Activated CD8-positive, alpha-beta memory T cell treated with anti-CD3 and anti-CD28 coated beads, Interleukin-2, amount 10 ng/mL, durations not matched to agents 7 days and 5 days (primary cell): ENCODE measurements at regions of chr12 and their contacts with region 1.

Region 1: GRCh38 chr12:55073043-55074022 is 52.9 kb upstream of the OR9K2 start:
- DNase-seq: peak; percentile 83
- ATAC-seq: peak; percentile 66
- H3K4me3 Mint-ChIP-seq: no peak overlapping the region
- H3K27ac Mint-ChIP-seq: no peak overlapping the region
- H3K4me1 Mint-ChIP-seq: peaks cover 1% of the 10 kb centered on the region
- H3K27me3 Mint-ChIP-seq: peaks cover 35% of the 10 kb centered on the region

Region 2: GRCh38 chr12:54749191-54749818 is 324.0 kb before region 1 on chr12:
- CTCF ChIA-PET with region 1: interaction called, 87 read pairs
- DNase-seq: peak; percentile 53
- ATAC-seq: peak; percentile 96
- H3K4me3 Mint-ChIP-seq: peak overlapping the region; percentile 39
- H3K27ac Mint-ChIP-seq: peak overlapping the region; percentile 67
- H3K4me1 Mint-ChIP-seq: peaks cover 21% of the 10 kb centered on the region
- H3K27me3 Mint-ChIP-seq: peaks cover 5% of the 10 kb centered on the region

Region 3: GRCh38 chr12:54958048-54958658 is 115.2 kb before region 1 on chr12:
- CTCF ChIA-PET with region 1: interaction called, 16 read pairs
- DNase-seq: peak; percentile 61
- ATAC-seq: peak; percentile 49
- H3K4me3 Mint-ChIP-seq: no peak overlapping the region
- H3K27ac Mint-ChIP-seq: no peak overlapping the region
- H3K4me1 Mint-ChIP-seq: peaks cover 44% of the 10 kb centered on the region
- H3K27me3 Mint-ChIP-seq: no peaks in the 10 kb centered on the region

Region 4: DNA sequence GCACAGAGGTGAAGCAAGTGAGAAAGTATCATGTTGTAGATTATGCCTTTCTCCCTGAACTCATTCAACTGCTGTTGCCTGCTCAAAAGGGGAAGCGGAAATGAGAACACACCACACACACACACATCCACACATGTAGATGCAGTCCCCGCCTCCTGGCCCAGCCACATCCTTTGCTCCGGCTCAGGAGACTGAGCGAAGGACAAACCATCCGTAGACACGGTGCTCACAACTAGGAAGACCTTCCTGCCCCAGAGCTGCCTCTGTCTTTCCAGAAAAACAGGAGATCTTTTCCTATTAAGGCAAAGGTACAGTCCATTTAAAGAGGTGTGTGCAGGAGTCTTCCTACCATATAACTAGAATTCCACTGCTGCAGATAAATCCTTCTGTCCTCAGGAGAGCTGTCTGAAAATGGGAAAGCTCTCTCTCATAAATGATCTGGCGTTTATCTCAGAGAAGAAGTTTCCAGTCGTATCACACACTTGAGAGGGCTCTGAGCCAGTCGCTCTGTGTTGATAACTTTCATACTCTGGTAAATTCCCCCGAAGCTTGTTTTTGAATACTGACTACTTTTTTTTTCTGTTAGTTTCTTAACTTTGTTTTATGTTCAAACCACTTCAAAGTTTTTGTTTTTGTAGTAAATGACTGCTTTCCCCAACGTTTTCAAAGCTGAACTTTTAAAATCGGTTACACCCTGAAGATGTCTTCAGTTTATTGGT is 88.5 kb before region 1 on chr12 and contains the start of gene TESPA1:
- CTCF ChIA-PET with region 1: interaction called, 38 read pairs
- DNase-seq: peak; percentile 94
- ATAC-seq: peak; percentile 95
- H3K4me3 Mint-ChIP-seq: peak within 1 kb of the TSS; percentile 93
- H3K27ac Mint-ChIP-seq: peak within 1 kb of the TSS; percentile 83
- H3K4me1 Mint-ChIP-seq: peaks cover 62% of the 10 kb centered on the region
- H3K27me3 Mint-ChIP-seq: no peaks in the 10 kb centered on the region
- total RNA-seq, gene TESPA1: 65.9 to 74.6 TPM

Region 5: DNA sequence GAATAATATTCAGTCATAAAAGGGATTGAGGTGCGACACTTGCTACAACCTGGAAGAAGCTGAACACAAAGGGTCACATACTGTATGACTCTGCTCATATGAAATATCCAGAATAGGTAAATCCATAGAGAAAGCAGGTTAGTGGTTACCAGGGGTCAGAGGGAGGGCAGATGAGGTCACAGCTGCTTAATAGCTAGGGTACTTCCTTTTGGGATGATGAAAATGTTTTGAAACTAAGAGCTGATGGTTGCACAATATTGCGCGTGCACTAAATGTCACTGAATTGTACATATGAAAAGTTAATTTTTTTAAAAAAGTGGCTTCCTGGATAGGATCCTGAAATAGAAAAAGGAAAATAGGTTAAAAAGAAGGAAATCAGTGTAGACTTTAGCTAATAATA is 29.8 kb before region 1 on chr12:
- CTCF ChIA-PET with region 1: interaction called, 11 read pairs
- DNase-seq: no peak
- ATAC-seq: no peak
- H3K4me3 Mint-ChIP-seq: no peak overlapping the region
- H3K27ac Mint-ChIP-seq: no peak overlapping the region
- H3K4me1 Mint-ChIP-seq: no peaks in the 10 kb centered on the region
- H3K27me3 Mint-ChIP-seq: peaks cover 18% of the 10 kb centered on the region

Region 6: DNA sequence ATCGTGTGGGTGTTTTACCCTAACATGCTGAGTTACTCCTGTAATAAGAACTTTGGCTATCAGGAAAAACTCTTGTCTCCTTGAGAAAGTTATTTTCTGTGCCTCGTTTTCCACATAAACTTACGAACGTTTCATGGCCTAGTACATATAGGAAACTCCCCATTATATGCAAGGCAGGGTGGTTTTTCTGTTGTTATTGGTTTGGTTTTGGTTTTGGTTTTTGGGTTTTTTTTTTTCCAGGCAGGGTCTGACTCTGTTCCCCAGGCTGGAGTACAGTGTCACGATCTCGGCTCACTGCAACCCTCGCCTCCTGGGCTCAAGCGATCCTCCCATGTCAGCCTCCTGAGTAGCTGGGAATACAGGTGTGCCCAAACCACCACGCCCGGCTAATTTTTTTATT is 262.7 kb after region 1 on chr12:
- CTCF ChIA-PET with region 1: no interaction called
- DNase-seq: no peak
- ATAC-seq: no peak
- H3K4me3 Mint-ChIP-seq: no peak overlapping the region
- H3K27ac Mint-ChIP-seq: no peak overlapping the region
- H3K4me1 Mint-ChIP-seq: no peaks in the 10 kb centered on the region
- H3K27me3 Mint-ChIP-seq: peaks cover 19% of the 10 kb centered on the region